Activated B cell treated with CpG ODN at 0.5 μM for 24 hours (primary cell): ENCODE measurements at regions of chrX and their contacts with region 1.

Region 1: DNA sequence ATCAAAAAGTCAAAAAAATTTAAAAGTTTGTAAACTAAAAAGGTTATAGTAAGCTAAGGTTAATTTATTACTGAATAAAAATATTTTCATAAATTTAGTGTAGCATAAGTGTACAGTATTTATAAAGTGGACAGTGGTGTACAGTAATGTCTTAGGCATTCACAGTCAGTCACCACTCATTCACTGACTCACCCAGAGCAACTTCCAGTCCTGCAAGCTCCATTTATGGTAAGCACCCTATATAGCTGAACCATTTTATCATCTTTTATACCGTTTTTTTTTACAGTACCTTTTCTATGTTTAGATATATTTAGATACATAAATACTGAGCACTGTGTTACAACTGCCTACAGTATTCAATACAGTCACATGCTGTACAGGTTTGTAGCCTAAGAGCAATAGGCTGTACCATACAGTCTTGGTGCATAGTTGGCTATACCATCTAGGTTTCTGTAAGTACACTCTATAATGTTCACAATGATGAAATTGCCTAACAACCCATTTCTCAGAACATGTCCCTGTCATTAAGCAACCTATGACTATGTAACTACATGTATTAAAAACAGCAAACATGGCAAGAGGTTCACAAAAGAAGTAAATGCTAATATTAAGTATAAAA is 18.6 kb downstream of the ACSL4 start:
- DNase-seq: no peak
- ATAC-seq: no peak
- H3K4me3 Mint-ChIP-seq: no peak overlapping the region
- H3K27ac Mint-ChIP-seq: no peak overlapping the region
- H3K4me1 Mint-ChIP-seq: peaks cover 30% of the 10 kb centered on the region
- H3K27me3 Mint-ChIP-seq: no peaks in the 10 kb centered on the region
- CTCF ChIP-seq: no peak

Region 2: DNA sequence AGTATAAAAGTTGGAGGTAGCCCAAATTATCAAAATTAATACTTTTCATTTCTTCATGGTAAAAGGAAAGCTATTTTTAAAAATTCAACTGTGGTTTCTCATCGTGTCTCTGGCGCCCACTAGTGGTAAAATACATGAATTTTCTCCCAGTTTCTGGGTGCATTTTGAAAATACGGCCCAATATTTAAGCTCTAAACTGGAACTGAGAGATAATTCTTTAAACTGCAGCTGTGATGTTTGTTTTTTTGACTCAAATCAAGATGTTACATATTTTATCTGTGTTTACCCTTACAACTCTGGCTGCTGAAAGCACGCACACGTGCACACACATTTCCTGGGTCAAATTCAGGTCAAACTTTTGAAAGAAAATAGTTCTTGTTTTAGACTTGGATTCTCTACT is 142.5 kb after region 1 on chrX:
- CTCF ChIA-PET with region 1: interaction called, 112 read pairs
- POLR2A ChIA-PET with region 1: interaction called, 4 read pairs
- intact Hi-C with region 1: loop called (anchors 1 kb)
- DNase-seq: no peak
- ATAC-seq: no peak
- H3K4me3 Mint-ChIP-seq: no peak overlapping the region
- H3K27ac Mint-ChIP-seq: no peak overlapping the region
- H3K4me1 Mint-ChIP-seq: peaks cover 7% of the 10 kb centered on the region
- H3K27me3 Mint-ChIP-seq: no peaks in the 10 kb centered on the region
- CTCF ChIP-seq: no peak

Region 3: GRCh38 chrX:110267874-110268273 is 553.4 kb after region 1 on chrX:
- CTCF ChIA-PET with region 1: no interaction called
- POLR2A ChIA-PET with region 1: no interaction called
- intact Hi-C with region 1: no loop called
- DNase-seq: no peak
- ATAC-seq: no peak
- H3K4me3 Mint-ChIP-seq: no peak overlapping the region
- H3K27ac Mint-ChIP-seq: no peak overlapping the region
- H3K4me1 Mint-ChIP-seq: peaks cover 29% of the 10 kb centered on the region
- H3K27me3 Mint-ChIP-seq: no peaks in the 10 kb centered on the region
- CTCF ChIP-seq: no peak